ENCODE measurements at regions of chr1 and their contacts with region 1.

Region 1: DNA sequence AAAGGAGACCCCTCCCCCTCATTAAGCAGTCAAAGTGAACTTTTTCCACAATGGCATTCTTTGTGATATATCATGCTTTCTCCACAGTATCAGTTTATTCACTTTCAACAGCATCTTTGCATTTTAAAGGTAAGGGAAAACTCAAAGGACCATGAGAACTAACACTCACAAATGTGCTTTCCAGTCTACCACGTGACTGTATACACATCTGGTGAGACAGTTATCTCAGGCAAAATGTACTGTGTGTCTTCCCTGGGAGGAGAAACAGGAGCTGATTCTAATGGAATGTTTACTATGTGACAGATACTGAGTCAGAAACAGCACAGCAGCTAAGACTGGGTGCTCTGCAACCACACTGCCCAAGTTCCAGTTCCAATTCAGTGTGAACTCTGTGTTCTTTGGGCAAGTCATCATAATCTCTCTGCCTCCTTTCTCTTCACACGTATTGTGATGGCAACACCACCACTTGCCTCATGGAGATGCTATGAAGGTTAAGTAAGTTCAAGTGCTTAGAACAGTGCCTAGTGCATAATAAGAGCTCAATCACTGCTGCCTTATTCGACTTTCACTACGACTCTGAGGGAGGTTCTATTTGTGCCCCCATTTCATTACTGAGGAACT is 79.0 kb downstream of the SLC45A1 start:
- DNase-seq: peak; percentile 68
- ATAC-seq: peak; percentile 84
- H3K4me3 Mint-ChIP-seq: peak overlapping the region; percentile 25
- H3K27ac Mint-ChIP-seq: peak overlapping the region; percentile 81
- H3K4me1 Mint-ChIP-seq: peaks cover 72% of the 10 kb centered on the region
- H3K27me3 Mint-ChIP-seq: no peaks in the 10 kb centered on the region

Region 2: GRCh38 chr1:8015036-8015808 is 381.7 kb before region 1 on chr1:
- CTCF ChIA-PET with region 1: no interaction called
- POLR2A ChIA-PET with region 1: no interaction called
- intact Hi-C with region 1: no loop called
- DNase-seq: peak; percentile 51
- ATAC-seq: peak; percentile 83
- H3K4me3 Mint-ChIP-seq: no peak overlapping the region
- H3K27ac Mint-ChIP-seq: no peak overlapping the region
- H3K4me1 Mint-ChIP-seq: peaks cover 2% of the 10 kb centered on the region
- H3K27me3 Mint-ChIP-seq: peaks cover 10% of the 10 kb centered on the region

Region 3: DNA sequence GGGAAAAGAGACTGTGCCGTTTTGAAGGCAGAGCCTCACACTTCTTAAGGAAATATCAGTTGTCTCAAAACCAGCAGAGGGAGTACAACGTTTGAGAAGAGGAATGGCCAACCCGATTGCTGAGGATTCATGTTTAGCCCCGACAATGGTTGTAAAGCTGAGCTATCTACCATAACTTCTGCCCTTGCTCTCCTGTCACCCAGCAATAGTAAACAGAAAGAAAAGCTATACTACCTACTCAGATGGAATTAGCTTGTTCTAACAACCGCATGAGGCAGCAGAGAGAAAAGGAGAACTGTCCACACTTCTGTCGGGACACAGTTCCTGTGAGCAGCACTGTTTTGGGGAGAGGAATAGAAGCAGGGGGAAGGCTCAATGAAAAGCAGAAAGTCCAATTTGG is 12.2 kb after region 1 on chr1:
- CTCF ChIA-PET with region 1: interaction called, 10 read pairs
- POLR2A ChIA-PET with region 1: interaction called, 4 read pairs
- intact Hi-C with region 1: no loop called
- DNase-seq: peak; percentile 23
- ATAC-seq: peak; percentile 69
- H3K4me3 Mint-ChIP-seq: peak overlapping the region; percentile 33
- H3K27ac Mint-ChIP-seq: peak overlapping the region; percentile 77
- H3K4me1 Mint-ChIP-seq: peaks cover 61% of the 10 kb centered on the region
- H3K27me3 Mint-ChIP-seq: no peaks in the 10 kb centered on the region

Region 4: GRCh38 chr1:8477166-8477982 is 80.5 kb after region 1 on chr1:
- CTCF ChIA-PET with region 1: no interaction called
- POLR2A ChIA-PET with region 1: no interaction called
- intact Hi-C with region 1: loop called in 1 of 2 experiments (anchors 2 kb)
- DNase-seq: peak; percentile 45
- ATAC-seq: peak; percentile 77
- H3K4me3 Mint-ChIP-seq: no peak overlapping the region
- H3K27ac Mint-ChIP-seq: peak overlapping the region; percentile 85
- H3K4me1 Mint-ChIP-seq: peaks cover 49% of the 10 kb centered on the region
- H3K27me3 Mint-ChIP-seq: no peaks in the 10 kb centered on the region